CD4-positive, alpha-beta memory T cell (primary cell): ENCODE measurements at regions of chr11 and their contacts with region 1.

Region 1: DNA sequence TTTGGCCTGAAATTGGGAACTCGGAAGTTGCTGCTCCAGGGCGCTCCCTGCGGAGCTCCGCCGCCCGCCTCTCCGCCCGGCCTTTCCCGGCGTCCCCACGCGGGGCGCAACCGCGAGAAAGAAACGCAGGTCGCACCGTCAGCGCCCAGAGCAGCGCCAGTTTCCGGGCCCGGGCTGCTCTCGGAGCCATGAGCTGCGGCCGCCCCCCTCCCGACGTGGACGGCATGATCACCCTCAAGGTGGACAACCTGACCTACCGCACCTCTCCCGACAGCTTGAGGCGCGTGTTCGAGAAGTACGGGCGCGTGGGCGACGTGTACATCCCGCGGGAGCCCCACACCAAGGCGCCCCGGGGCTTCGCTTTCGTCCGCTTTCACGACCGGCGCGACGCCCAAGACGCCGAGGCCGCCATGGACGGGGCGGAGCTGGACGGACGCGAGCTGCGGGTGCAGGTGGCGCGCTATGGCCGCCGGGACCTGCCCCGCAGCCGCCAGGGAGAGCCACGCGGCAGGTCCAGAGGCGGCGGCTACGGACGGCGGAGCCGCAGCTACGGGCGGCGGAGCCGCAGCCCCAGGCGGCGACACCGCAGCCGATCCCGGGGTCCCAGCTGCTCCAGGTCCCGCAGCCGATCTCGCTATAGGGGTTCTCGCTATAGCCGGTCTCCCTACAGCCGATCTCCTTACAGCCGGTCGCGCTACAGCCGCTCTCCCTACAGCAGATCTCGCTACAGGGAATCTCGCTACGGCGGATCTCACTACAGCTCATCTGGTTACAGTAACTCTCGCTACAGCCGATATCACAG is 521 bp downstream of the SRSF8 start:
- DNase-seq: peak; percentile 72 to 80 (median 78)
- H3K4me3 ChIP-seq: peak overlapping the region; percentile 92 to 96
- H3K4me3 Mint-ChIP-seq: peak overlapping the region; percentile 94 to 98 (median 96)
- H3K27ac ChIP-seq: peak overlapping the region; percentile 95
- H3K27ac Mint-ChIP-seq: peak overlapping the region; percentile 94 to 98 (median 96)
- H3K4me1 ChIP-seq: peaks cover 32% of the 10 kb centered on the region
- H3K4me1 Mint-ChIP-seq: peaks cover 20 to 35% (median 29%) of the 10 kb centered on the region in 4 donors
- H3K27me3 ChIP-seq: no peaks in the 10 kb centered on the region
- H3K27me3 Mint-ChIP-seq: peaks cover 0 to 3% of the 10 kb centered on the region in 2 donors

Region 2: GRCh38 chr11:94493281-94494125 is 573.7 kb before region 1 on chr11 and contains the starts of genes ANKRD49 and MRE11:
- CTCF ChIA-PET with region 1: no interaction called
- POLR2A ChIA-PET with region 1: no interaction called
- intact Hi-C with region 1: loop called (anchors 5 kb)
- DNase-seq: peak; percentile 97 to 98 (median 97)
- H3K4me3 ChIP-seq: peak within 1 kb of the TSS; percentile 90 to 94
- H3K4me3 Mint-ChIP-seq: peak within 1 kb of the TSS; percentile 94 to 98 (median 97)
- H3K27ac ChIP-seq: peak within 1 kb of the TSS; percentile 86
- H3K27ac Mint-ChIP-seq: peak within 1 kb of the TSS; percentile 91 to 99 (median 98)
- H3K4me1 ChIP-seq: peaks cover 36% of the 10 kb centered on the region
- H3K4me1 Mint-ChIP-seq: peaks cover 20 to 50% (median 28%) of the 10 kb centered on the region in 4 donors
- H3K27me3 ChIP-seq: no peaks in the 10 kb centered on the region
- H3K27me3 Mint-ChIP-seq: no peaks in the 10 kb centered on the region
- total RNA-seq, gene ANKRD49: 53.4 to 57.6 TPM
- total RNA-seq, gene MRE11: 43.3 to 43.4 TPM

Region 3: DNA sequence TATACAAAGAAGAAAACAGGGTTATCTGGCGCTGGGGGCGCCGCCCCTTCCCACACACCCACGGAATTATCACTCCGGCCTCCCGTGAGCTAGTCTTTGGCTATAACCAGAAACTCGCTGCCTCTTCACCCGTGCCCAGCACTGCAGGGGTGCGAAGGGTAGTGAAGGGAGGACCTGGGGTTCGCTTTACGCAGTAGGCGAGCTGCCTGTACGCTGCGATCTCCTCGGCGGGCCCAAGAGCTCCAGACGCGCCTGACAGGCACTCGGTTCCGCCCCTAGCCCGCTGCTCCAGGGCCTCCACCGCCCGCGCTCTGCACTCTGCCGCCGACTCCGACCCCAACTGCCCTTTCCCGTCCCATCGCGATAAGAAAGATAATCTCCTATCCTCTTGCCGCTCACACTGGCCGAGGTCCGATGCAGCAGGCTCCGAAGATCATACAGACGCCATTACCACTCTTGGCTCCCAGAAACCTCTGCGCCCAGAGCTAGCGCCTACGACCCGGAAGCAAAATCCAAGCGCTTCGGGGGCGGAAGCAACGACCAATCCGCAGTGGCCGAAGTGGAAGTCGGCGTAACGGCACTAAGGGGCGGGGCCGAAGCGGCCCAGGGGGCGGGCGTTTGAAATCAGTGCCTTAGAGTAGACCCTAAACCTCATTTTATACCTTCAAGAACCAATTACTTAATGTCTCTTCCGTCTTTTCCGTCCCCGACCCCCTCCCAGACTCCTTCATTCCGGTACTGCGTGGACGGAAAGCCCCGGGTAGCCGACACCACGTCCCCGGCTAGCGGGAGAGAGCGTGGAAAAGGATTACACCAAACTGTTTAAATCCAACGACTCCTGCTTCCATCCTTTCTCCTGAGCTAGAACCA is 93.9 kb before region 1 on chr11 and contains the starts of genes CWC15 and KDM4D:
- CTCF ChIA-PET with region 1: interaction called, 8 read pairs
- POLR2A ChIA-PET with region 1: interaction called, 57 read pairs
- intact Hi-C with region 1: loop called (anchors 1 kb)
- DNase-seq: peak; percentile 91 to 96 (median 93)
- H3K4me3 ChIP-seq: peak within 1 kb of the TSS; percentile 61 to 95
- H3K4me3 Mint-ChIP-seq: peak within 1 kb of the TSS; percentile 94 to 100 (median 98)
- H3K27ac ChIP-seq: peak within 1 kb of the TSS; percentile 92
- H3K27ac Mint-ChIP-seq: peak within 1 kb of the TSS; percentile 84 to 100 (median 98)
- H3K4me1 ChIP-seq: peaks cover 16% of the 10 kb centered on the region
- H3K4me1 Mint-ChIP-seq: peaks cover 14 to 35% (median 25%) of the 10 kb centered on the region in 4 donors
- H3K27me3 ChIP-seq: no peaks in the 10 kb centered on the region
- H3K27me3 Mint-ChIP-seq: no peaks in the 10 kb centered on the region
- total RNA-seq, gene CWC15: 62.7 to 69.4 TPM
- total RNA-seq, gene KDM4D: 0.32 to 0.39 TPM

Region 4: GRCh38 chr11:95084509-95084908 is 17.3 kb after region 1 on chr11:
- CTCF ChIA-PET with region 1: interaction called, 124 read pairs
- POLR2A ChIA-PET with region 1: interaction called, 376 read pairs
- intact Hi-C with region 1: loop called (anchors 1 kb)
- DNase-seq: no peak
- H3K4me3 ChIP-seq: no peak overlapping the region
- H3K4me3 Mint-ChIP-seq: no peak overlapping the region
- H3K27ac ChIP-seq: no peak overlapping the region
- H3K27ac Mint-ChIP-seq: no peak overlapping the region
- H3K4me1 ChIP-seq: peaks cover 10% of the 10 kb centered on the region
- H3K4me1 Mint-ChIP-seq: peaks cover 8 to 14% (median 13%) of the 10 kb centered on the region in 4 donors
- H3K27me3 ChIP-seq: no peaks in the 10 kb centered on the region
- H3K27me3 Mint-ChIP-seq: peaks cover 0 to 9% of the 10 kb centered on the region in 2 donors

Region 5: DNA sequence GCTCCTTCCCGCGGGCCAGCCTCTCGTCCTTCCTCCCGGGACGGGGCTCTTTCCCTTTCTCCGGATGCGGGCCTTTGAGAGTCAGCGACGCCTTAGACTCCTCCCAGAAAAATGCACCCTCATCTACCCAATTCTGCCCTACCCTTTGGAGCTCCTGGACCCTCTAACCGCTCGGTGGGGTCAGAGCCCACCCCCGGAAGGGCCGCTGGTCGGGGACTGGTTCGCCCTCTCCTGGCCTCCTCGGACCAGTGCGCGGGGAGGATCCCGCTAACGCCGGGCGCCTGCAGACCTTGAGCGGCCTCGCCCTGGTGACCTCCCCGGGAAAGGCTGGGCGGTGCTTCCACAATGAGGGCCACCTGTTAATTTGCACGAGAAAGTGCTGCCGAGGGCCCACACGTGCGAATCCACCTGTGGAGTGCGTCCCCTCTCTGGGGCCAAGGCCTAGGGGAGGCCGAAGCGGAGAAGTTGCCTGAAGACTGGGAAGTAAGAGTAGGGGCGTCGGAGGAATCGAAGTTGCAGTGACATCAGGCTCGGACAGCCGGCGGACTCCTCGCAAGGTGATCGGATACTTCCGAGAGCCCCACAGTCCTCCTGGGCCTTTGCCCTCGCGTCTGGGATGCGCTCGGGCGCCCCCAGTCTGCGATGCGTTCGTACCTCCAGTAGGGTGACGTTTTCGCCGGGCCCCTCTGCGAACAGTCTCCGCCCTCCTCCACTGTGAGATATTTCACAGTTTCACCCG is 83.9 kb after region 1 on chr11:
- CTCF ChIA-PET with region 1: interaction called, 167 read pairs
- POLR2A ChIA-PET with region 1: interaction called, 138 read pairs
- intact Hi-C with region 1: loop called (anchors 1 kb)
- DNase-seq: peak; percentile 91 to 93 (median 91)
- H3K4me3 ChIP-seq: peak overlapping the region; percentile 45 to 87
- H3K4me3 Mint-ChIP-seq: peak overlapping the region; percentile 85 to 96 (median 90)
- H3K27ac ChIP-seq: peak overlapping the region; percentile 80
- H3K27ac Mint-ChIP-seq: peak overlapping the region; percentile 90 to 99 (median 97)
- H3K4me1 ChIP-seq: peaks cover 35% of the 10 kb centered on the region
- H3K4me1 Mint-ChIP-seq: peaks cover 26 to 44% (median 36%) of the 10 kb centered on the region in 4 donors
- H3K27me3 ChIP-seq: no peaks in the 10 kb centered on the region
- H3K27me3 Mint-ChIP-seq: peaks cover 2 to 8% of the 10 kb centered on the region in 2 donors

Region 6: DNA sequence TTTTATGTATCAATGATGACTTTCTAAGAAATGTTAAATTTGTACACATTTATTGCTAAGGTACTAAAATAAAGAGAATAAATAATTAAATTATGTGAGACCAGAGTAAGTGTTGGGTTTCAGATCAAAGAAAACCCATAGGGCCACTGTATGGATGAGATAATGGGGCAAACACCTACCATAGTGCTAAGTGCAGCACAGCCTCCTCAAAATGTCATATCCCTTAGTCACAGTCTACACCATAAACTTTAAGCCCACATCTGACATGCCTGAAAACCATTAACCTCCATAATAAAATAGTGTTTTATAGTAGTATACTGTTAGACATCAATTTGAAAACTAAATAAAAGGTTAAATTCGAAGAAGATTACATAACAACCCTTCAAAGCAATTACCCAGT is 126.3 kb after region 1 on chr11:
- CTCF ChIA-PET with region 1: no interaction called
- POLR2A ChIA-PET with region 1: no interaction called
- intact Hi-C with region 1: no loop called
- DNase-seq: no peak
- H3K4me3 ChIP-seq: no peak overlapping the region
- H3K4me3 Mint-ChIP-seq: no peak overlapping the region
- H3K27ac ChIP-seq: no peak overlapping the region
- H3K27ac Mint-ChIP-seq: peak overlapping the region in 1 of 7 donors; percentile 13
- H3K4me1 ChIP-seq: no peaks in the 10 kb centered on the region
- H3K4me1 Mint-ChIP-seq: peaks cover 21 to 35% (median 27%) of the 10 kb centered on the region in 4 donors
- H3K27me3 ChIP-seq: no peaks in the 10 kb centered on the region
- H3K27me3 Mint-ChIP-seq: no peaks in the 10 kb centered on the region

Region 7: GRCh38 chr11:95790123-95790932 is 723.1 kb after region 1 on chr11 and contains the start of gene CEP57:
- CTCF ChIA-PET with region 1: interaction called, 11 read pairs
- POLR2A ChIA-PET with region 1: interaction called, 99 read pairs
- intact Hi-C with region 1: loop called (anchors 1 kb)
- DNase-seq: peak; percentile 95 to 99 (median 96)
- H3K4me3 ChIP-seq: peak within 1 kb of the TSS; percentile 68 to 98
- H3K4me3 Mint-ChIP-seq: peak within 1 kb of the TSS; percentile 97 to 100 (median 99)
- H3K27ac ChIP-seq: peak within 1 kb of the TSS; percentile 99
- H3K27ac Mint-ChIP-seq: peak within 1 kb of the TSS; percentile 100
- H3K4me1 ChIP-seq: peaks cover 47% of the 10 kb centered on the region
- H3K4me1 Mint-ChIP-seq: peaks cover 43 to 70% (median 56%) of the 10 kb centered on the region in 4 donors
- H3K27me3 ChIP-seq: no peaks in the 10 kb centered on the region
- H3K27me3 Mint-ChIP-seq: no peaks in the 10 kb centered on the region
- total RNA-seq, gene CEP57: 76.0 to 78.9 TPM